ENCODE measurements at regions of chr2 and their contacts with region 1.

Region 1: DNA sequence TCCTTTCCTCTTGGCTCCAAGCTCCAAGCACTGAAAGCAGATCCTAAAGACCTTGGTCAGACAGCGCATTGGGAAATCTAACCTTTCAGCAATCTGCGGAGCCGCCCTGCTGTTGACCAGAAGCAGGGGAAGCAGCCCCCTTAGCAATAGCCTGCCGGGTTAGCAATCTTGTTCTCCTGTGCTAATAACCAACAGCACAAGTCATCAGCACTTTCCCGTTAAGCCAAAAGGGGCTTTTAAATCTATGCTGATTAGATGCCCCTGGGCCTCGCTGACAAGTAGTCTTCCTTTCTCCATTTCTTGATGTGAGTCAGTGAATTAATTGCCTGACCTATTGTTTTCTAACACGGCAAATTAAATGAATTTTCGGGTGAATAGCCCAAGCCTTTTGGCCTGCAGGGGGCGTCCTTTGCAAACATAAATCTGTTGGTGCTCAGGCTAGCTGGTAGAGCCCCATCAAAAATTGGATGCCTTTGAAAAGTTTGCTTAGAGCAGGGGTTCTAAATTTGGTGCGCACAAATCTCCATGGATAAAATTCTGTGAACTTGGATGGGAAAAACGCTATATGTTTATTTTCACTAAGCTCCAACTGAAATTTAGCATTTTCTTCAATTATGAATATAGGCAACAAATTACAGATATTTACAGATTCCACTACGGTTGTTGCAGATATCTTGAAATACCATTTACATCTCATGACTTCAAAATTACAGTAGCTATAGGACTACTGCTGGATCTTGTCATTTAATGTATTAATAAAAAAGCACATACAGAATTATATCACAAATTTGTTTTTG is 24.6 kb downstream of the MAIP1 start:
- DNase-seq: peak; percentile 80 to 87 (median 86)
- ATAC-seq: peak; percentile 74 to 78 (median 77)
- H3K4me3 ChIP-seq: peak overlapping the region; percentile 11 to 37 (median 36)
- H3K27ac ChIP-seq: peak overlapping the region; percentile 16 to 54 (median 26)
- H3K4me1 ChIP-seq: peaks cover 0 to 40% (median 16%) of the 10 kb centered on the region in 4 donors
- H3K27me3 ChIP-seq: no peaks in the 10 kb centered on the region
- CTCF ChIP-seq: peak; percentile 86 to 89 (median 87)
- POLR2A ChIP-seq: no peak

Region 2: GRCh38 chr2:200471324-200471848 is 491.4 kb after region 1 on chr2:
- intact Hi-C with region 1: loop called (anchors 5 to 10 kb)
- DNase-seq: no peak
- ATAC-seq: peak; percentile 40 to 56 (median 44)
- H3K4me3 ChIP-seq: no peak overlapping the region
- H3K27ac ChIP-seq: no peak overlapping the region
- H3K4me1 ChIP-seq: no peaks in the 10 kb centered on the region
- H3K27me3 ChIP-seq: no peaks in the 10 kb centered on the region
- CTCF ChIP-seq: peak; percentile 44 to 50 (median 45)
- POLR2A ChIP-seq: no peak

Region 3: GRCh38 chr2:200483729-200484198 is 503.7 kb after region 1 on chr2:
- intact Hi-C with region 1: loop called (anchors 5 to 10 kb)
- DNase-seq: peak in 2 of 3 donors; percentile 42 to 67
- ATAC-seq: peak; percentile 63 to 78 (median 70)
- H3K4me3 ChIP-seq: no peak overlapping the region
- H3K27ac ChIP-seq: no peak overlapping the region
- H3K4me1 ChIP-seq: no peaks in the 10 kb centered on the region
- H3K27me3 ChIP-seq: no peaks in the 10 kb centered on the region
- CTCF ChIP-seq: peak; percentile 27 to 60 (median 39)
- POLR2A ChIP-seq: no peak

Measured in right lobe of liver (tissue), 6 donors.